ENCODE measurements at regions of chr3 and their contacts with region 1.

Region 1: DNA sequence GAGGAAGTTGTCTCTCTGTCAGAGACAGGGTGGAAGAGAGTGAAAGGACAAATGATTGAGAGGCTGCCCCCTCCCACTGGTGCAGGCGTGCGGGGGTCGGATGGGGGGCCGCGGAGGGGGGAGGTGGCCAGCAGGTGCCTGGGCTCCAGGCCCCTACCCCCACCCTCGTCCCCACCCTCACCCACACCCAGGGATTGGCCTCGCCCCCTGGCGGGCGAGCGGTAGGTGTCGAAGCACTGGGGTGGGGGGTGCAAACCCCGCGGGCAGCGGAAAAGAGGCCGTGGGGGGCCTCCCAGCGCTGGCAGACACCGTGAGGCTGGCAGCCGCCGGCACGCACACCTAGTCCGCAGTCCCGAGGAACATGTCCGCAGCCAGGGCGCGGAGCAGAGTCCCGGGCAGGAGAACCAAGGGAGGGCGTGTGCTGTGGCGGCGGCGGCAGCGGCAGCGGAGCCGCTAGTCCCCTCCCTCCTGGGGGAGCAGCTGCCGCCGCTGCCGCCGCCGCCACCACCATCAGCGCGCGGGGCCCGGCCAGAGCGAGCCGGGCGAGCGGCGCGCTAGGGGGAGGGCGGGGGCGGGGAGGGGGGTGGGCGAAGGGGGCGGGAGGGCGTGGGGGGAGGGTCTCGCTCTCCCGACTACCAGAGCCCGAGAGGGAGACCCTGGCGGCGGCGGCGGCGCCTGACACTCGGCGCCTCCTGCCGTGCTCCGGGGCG is at the start of gene KAT2B:
- DNase-seq: peak; percentile 79
- H3K4me3 ChIP-seq: peak within 1 kb of the TSS; percentile 55 to 95 (median 94)
- H3K27ac ChIP-seq: peak within 1 kb of the TSS; percentile 42
- H3K4me1 ChIP-seq: peaks cover 16% of the 10 kb centered on the region
- H3K27me3 ChIP-seq: no peaks in the 10 kb centered on the region
- CTCF ChIP-seq: peak; percentile 35 to 77
- POLR2A ChIP-seq: no peak
- total RNA-seq, gene KAT2B: 9.7 and 11.0 TPM in 2 replicates

Region 2: GRCh38 chr3:19046440-19046839 is 993.5 kb before region 1 on chr3:
- CTCF ChIA-PET with region 1: no interaction called
- POLR2A ChIA-PET with region 1: no interaction called
- dilution Hi-C with region 1: no loop called
- intact Hi-C with region 1: no loop called
- DNase-seq: no peak
- H3K4me3 ChIP-seq: no peak overlapping the region
- H3K27ac ChIP-seq: no peak overlapping the region
- H3K4me1 ChIP-seq: no peaks in the 10 kb centered on the region
- H3K27me3 ChIP-seq: no peaks in the 10 kb centered on the region
- CTCF ChIP-seq: no peak
- POLR2A ChIP-seq: no peak

Region 3: GRCh38 chr3:19734453-19734852 is 305.5 kb before region 1 on chr3:
- CTCF ChIA-PET with region 1: no interaction called
- POLR2A ChIA-PET with region 1: no interaction called
- dilution Hi-C with region 1: no loop called
- intact Hi-C with region 1: no loop called
- DNase-seq: no peak
- H3K4me3 ChIP-seq: no peak overlapping the region
- H3K27ac ChIP-seq: no peak overlapping the region
- H3K4me1 ChIP-seq: no peaks in the 10 kb centered on the region
- H3K27me3 ChIP-seq: no peaks in the 10 kb centered on the region
- CTCF ChIP-seq: no peak
- POLR2A ChIP-seq: no peak

Region 4: DNA sequence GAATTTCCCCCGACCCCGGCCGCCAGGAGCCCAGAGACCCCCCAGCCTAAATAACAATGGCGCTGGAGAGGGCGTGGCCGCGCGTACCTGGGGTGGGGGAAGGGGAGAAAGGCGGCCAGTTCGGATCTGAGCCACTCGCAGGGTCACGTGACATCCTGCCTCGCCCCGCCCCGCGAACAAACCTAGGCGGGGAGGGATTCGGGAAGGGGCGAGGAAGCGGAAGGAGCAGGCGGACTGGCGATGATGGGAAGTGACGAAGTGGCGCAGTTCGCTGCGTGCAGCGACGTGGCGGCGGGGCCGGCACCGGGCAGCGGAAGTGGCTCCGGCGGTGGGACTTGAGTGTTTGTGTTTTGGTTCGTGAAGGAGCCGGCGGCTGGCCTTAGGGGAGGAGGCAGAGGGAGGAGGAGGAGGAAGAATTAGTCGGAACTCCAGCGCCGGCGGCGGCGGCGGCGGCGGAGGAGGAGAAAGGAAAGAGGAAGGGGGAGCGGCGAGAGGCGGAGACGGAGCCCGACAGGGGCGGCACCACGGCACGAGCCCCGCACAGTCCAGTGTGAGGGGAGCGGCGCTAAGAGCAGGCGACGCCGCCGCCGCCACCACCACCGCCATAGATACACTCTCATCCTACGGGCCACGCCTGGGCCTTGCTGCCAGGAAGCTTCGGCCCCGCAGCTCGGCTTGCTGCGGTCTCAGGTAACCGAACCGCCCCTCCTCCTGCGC is 92.9 kb before region 1 on chr3 and contains the start of gene RAB5A:
- CTCF ChIA-PET with region 1: no interaction called
- POLR2A ChIA-PET with region 1: no interaction called
- dilution Hi-C with region 1: no loop called
- intact Hi-C with region 1: loop called (anchors 1 kb)
- DNase-seq: peak; percentile 99
- H3K4me3 ChIP-seq: peak within 1 kb of the TSS; percentile 88 to 100 (median 93)
- H3K27ac ChIP-seq: peak within 1 kb of the TSS; percentile 97
- H3K4me1 ChIP-seq: peaks cover 23% of the 10 kb centered on the region
- H3K27me3 ChIP-seq: no peaks in the 10 kb centered on the region
- CTCF ChIP-seq: no peak
- POLR2A ChIP-seq: peak; percentile 80
- total RNA-seq, gene RAB5A: 63.8 and 66.9 TPM in 2 replicates

Region 5: GRCh38 chr3:19994796-19995195 is 45.1 kb before region 1 on chr3:
- CTCF ChIA-PET with region 1: interaction called, 3 read pairs
- POLR2A ChIA-PET with region 1: no interaction called
- dilution Hi-C with region 1: no loop called
- intact Hi-C with region 1: loop called (anchors 5 kb)
- DNase-seq: no peak
- H3K4me3 ChIP-seq: no peak overlapping the region
- H3K27ac ChIP-seq: no peak overlapping the region
- H3K4me1 ChIP-seq: no peaks in the 10 kb centered on the region
- H3K27me3 ChIP-seq: no peaks in the 10 kb centered on the region
- CTCF ChIP-seq: no peak
- POLR2A ChIP-seq: no peak

Region 6: GRCh38 chr3:20023623-20024405 is 16.1 kb before region 1 on chr3:
- CTCF ChIA-PET with region 1: interaction called, 11 read pairs
- POLR2A ChIA-PET with region 1: no interaction called
- dilution Hi-C with region 1: no loop called
- intact Hi-C with region 1: loop called (anchors 1 kb)
- DNase-seq: peak; percentile 70
- H3K4me3 ChIP-seq: no peak overlapping the region
- H3K27ac ChIP-seq: peak overlapping the region; percentile 13
- H3K4me1 ChIP-seq: peaks cover 21% of the 10 kb centered on the region
- H3K27me3 ChIP-seq: no peaks in the 10 kb centered on the region
- CTCF ChIP-seq: no peak
- POLR2A ChIP-seq: no peak

Region 7: DNA sequence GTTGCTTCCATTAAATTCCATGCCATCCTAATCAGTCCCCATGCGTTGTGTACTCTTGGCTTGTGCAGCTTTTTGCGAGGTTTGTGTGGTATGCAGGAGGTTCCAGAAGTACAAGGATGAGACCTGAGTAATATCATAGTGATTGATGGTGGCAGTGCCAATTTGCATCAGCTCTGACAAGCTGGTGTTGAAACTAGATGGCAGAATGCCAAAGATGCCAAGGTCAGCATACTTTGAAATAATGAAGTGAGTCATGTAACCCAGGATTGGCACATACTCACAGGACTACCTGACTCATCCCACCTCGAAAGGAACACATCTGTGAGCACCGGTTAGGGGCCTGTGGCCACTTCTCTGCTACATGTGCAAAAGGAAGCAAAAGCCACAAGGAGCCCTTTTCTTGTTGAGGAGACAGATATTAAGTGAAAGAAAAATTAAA is 14.6 kb after region 1 on chr3:
- CTCF ChIA-PET with region 1: interaction called, 3 read pairs
- POLR2A ChIA-PET with region 1: interaction called, 4 read pairs
- dilution Hi-C with region 1: no loop called
- intact Hi-C with region 1: loop called (anchors 1 kb)
- DNase-seq: peak; percentile 79
- H3K4me3 ChIP-seq: no peak overlapping the region
- H3K27ac ChIP-seq: no peak overlapping the region
- H3K4me1 ChIP-seq: peaks cover 33% of the 10 kb centered on the region
- H3K27me3 ChIP-seq: no peaks in the 10 kb centered on the region
- CTCF ChIP-seq: no peak
- POLR2A ChIP-seq: no peak

Region 8: GRCh38 chr3:20185701-20186598 is 146.0 kb after region 1 on chr3 and contains the start of gene SGO1:
- CTCF ChIA-PET with region 1: interaction called, 4 read pairs
- POLR2A ChIA-PET with region 1: interaction called, 5 read pairs
- dilution Hi-C with region 1: no loop called
- intact Hi-C with region 1: loop called (anchors 1 kb)
- DNase-seq: peak; percentile 98
- H3K4me3 ChIP-seq: peak within 1 kb of the TSS; percentile 90 to 93 (median 91)
- H3K27ac ChIP-seq: peak within 1 kb of the TSS; percentile 85
- H3K4me1 ChIP-seq: peaks cover 21% of the 10 kb centered on the region
- H3K27me3 ChIP-seq: no peaks in the 10 kb centered on the region
- CTCF ChIP-seq: no peak
- POLR2A ChIP-seq: peak; percentile 91
- total RNA-seq, gene SGO1: 15.5 and 21.7 TPM in 2 replicates

Region 9: GRCh38 chr3:20256144-20256543 is 216.2 kb after region 1 on chr3:
- CTCF ChIA-PET with region 1: no interaction called
- POLR2A ChIA-PET with region 1: interaction called, 3 read pairs
- dilution Hi-C with region 1: no loop called
- intact Hi-C with region 1: loop called (anchors 2 kb)
- DNase-seq: peak; percentile 92
- H3K4me3 ChIP-seq: peak overlapping the region in 1 of 3 experiments; percentile 11
- H3K27ac ChIP-seq: peak overlapping the region; percentile 83
- H3K4me1 ChIP-seq: peaks cover 18% of the 10 kb centered on the region
- H3K27me3 ChIP-seq: no peaks in the 10 kb centered on the region
- CTCF ChIP-seq: no peak
- POLR2A ChIP-seq: no peak

Region 10: GRCh38 chr3:20288050-20288449 is 248.1 kb after region 1 on chr3:
- CTCF ChIA-PET with region 1: no interaction called
- POLR2A ChIA-PET with region 1: no interaction called
- dilution Hi-C with region 1: no loop called
- intact Hi-C with region 1: no loop called
- DNase-seq: no peak
- H3K4me3 ChIP-seq: no peak overlapping the region
- H3K27ac ChIP-seq: no peak overlapping the region
- H3K4me1 ChIP-seq: no peaks in the 10 kb centered on the region
- H3K27me3 ChIP-seq: no peaks in the 10 kb centered on the region
- CTCF ChIP-seq: no peak
- POLR2A ChIP-seq: no peak